ENCODE measurements at regions of chr1 and their contacts with region 1.

Region 1: DNA sequence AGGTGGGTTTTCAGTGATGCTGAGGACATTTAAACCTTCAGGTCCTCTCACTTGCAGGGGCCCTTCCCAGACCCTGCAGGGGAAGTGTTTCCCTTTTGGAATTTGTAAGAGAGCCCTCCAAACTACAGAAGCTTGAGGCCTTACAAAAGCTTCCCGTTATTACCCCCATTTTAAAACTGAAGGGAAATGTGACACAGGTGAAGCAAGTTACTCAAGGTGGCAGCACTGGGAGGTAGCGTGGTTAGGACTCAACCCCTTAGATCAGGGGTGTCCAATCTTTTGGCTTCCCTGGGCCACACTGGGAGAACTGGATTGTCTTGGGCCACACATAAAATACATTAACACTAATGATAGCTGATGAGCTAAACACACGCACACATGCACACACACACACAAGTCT is 15.9 kb upstream of the ZC3H12A start:
- DNase-seq: no peak
- H3K4me3 ChIP-seq: no peak overlapping the region
- H3K27ac ChIP-seq: no peak overlapping the region
- H3K4me1 ChIP-seq: peaks cover 6 to 13% (median 9%) of the 10 kb centered on the region in 6 donors
- H3K27me3 ChIP-seq: no peaks in the 10 kb centered on the region
- CTCF ChIP-seq: peak in 1 of 11 experiments; percentile 7
- POLR2A ChIP-seq: no peak

Region 2: DNA sequence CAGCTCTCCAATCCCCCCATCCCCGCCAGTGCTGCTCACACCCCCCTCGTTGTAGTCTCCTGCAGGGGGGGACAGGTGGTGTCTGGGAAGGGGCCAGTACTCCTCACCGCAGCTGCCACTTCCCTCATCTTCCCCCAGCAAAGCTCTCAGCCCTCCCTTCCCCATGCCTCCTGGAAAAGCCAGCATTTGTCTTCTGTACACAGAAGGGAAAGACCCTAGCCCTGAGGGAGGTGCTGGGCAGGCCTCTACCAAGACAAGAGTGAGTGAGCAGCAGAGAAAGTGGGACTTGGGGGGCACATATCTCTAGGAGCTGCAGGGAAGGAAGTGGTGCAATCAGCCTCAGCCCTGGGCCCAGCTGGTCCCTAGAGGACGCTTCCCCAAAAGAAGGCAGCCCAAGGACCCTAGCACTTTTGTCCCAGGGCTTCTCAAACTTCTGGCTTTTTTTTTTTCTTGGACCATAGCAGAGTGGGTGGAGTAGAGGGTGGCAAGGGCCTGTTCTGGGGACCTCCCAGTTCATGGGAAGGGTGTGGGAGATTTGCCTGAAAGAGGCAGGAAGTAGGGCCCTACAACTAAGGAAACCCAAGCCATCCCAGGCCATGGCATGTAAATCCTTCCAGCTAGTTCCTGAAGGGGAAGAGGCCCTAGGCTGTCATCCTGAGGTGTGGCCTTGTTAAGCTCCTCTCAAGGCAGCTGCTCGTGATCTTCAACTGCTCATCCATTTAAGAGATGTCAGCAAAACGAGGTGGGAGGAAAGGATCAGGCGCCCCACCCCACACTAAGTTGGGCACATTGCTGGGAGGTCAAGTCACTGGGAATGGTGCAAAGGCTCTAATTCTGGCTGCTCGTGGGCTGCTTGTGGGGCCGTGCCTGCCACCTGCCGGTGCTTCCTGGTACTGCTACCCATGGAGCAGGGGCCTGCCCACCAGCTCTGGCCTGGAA is 28.4 kb after region 1 on chr1:
- intact Hi-C with region 1: loop called (anchors 2 kb)
- DNase-seq: peak; percentile 93
- H3K4me3 ChIP-seq: no peak overlapping the region
- H3K27ac ChIP-seq: peak overlapping the region; percentile 54 to 98 (median 76)
- H3K4me1 ChIP-seq: peaks cover 36 to 66% (median 55%) of the 10 kb centered on the region in 6 donors
- H3K27me3 ChIP-seq: no peaks in the 10 kb centered on the region
- CTCF ChIP-seq: peak; percentile 96 to 99 (median 99)
- POLR2A ChIP-seq: no peak

Region 3: DNA sequence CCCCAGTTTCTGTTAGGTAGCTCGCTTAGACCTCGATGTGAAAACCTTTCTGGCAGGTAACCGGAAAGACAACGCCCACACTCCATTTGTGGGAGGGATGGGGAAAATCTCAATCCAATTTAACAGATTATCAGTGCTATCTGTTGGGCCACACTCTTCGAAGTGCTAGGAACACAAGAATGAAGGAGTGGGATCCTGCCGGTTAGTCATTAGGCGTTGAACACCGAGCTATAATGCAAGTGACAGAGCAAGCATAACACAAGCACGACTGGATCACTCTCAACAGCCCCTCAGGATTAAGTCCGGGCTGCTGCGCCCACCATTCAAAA is 95.0 kb after region 1 on chr1:
- intact Hi-C with region 1: no loop called
- DNase-seq: no peak
- H3K4me3 ChIP-seq: peak overlapping the region; percentile 81 to 100 (median 96)
- H3K27ac ChIP-seq: peak overlapping the region; percentile 86 to 96 (median 92)
- H3K4me1 ChIP-seq: peaks cover 10 to 65% (median 44%) of the 10 kb centered on the region in 6 donors
- H3K27me3 ChIP-seq: peaks cover 0 to 13% (median 0%) of the 10 kb centered on the region in 7 donors
- CTCF ChIP-seq: no peak
- POLR2A ChIP-seq: no peak

Measured in spleen (tissue), 13 donors.